Common myeloid progenitor, CD34-positive (primary cell): ENCODE measurements at regions of chr2 and their contacts with region 1.

Region 1: GRCh38 chr2:54704688-54705605 is 18.5 kb upstream of the EML6 start:
- DNase-seq: peak; percentile 69 to 86 (median 83)
- H3K4me3 ChIP-seq: no peak overlapping the region
- H3K27ac ChIP-seq: no peak overlapping the region
- H3K4me1 ChIP-seq: peaks cover 0 to 14% (median 11%) of the 10 kb centered on the region in 4 experiments
- H3K27me3 ChIP-seq: peaks cover 0 to 11% (median 0%) of the 10 kb centered on the region in 5 experiments

Region 2: GRCh38 chr2:54106631-54107454 is 598.1 kb before region 1 on chr2:
- CTCF ChIA-PET with region 1: interaction called, 14 read pairs
- POLR2A ChIA-PET with region 1: no interaction called
- DNase-seq: peak; percentile 69 to 83 (median 78)
- H3K4me3 ChIP-seq: peak overlapping the region in 1 of 7 experiments; percentile 53
- H3K27ac ChIP-seq: no peak overlapping the region
- H3K4me1 ChIP-seq: peaks cover 2 to 9% (median 7%) of the 10 kb centered on the region in 4 experiments
- H3K27me3 ChIP-seq: no peaks in the 10 kb centered on the region

Region 3: DNA sequence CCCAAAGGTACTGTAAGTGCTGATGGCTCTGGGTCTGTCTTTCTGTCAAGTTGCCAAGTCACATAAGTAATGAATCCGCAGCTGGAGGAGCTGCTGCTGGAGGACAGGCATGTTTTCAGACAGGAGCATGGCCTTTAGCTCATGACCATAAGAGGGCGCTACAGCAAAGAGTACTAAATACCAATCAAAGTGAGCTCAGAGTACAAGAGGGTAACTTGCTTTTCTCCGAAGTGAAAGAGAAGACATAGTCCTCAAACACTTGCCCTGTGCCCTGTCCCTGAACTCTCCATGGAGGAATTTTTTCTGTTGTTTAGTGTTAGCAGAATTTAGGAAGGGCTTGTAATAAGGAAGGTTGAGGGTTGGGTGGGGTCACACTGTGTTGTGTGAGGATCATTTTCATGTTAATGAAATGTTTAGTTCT is 39.5 kb before region 1 on chr2:
- CTCF ChIA-PET with region 1: interaction called, 52 read pairs
- POLR2A ChIA-PET with region 1: interaction called, 5 read pairs
- DNase-seq: peak; percentile 71 to 84 (median 73)
- H3K4me3 ChIP-seq: no peak overlapping the region
- H3K27ac ChIP-seq: no peak overlapping the region
- H3K4me1 ChIP-seq: peaks cover 0 to 15% (median 9%) of the 10 kb centered on the region in 4 experiments
- H3K27me3 ChIP-seq: no peaks in the 10 kb centered on the region

Region 4: GRCh38 chr2:54691445-54692135 is 13.4 kb before region 1 on chr2:
- CTCF ChIA-PET with region 1: interaction called, 47 read pairs
- POLR2A ChIA-PET with region 1: no interaction called
- DNase-seq: peak in 2 of 3 donors; percentile 43 to 63
- H3K4me3 ChIP-seq: no peak overlapping the region
- H3K27ac ChIP-seq: no peak overlapping the region
- H3K4me1 ChIP-seq: peaks cover 0 to 14% (median 5%) of the 10 kb centered on the region in 4 experiments
- H3K27me3 ChIP-seq: no peaks in the 10 kb centered on the region

Region 5: DNA sequence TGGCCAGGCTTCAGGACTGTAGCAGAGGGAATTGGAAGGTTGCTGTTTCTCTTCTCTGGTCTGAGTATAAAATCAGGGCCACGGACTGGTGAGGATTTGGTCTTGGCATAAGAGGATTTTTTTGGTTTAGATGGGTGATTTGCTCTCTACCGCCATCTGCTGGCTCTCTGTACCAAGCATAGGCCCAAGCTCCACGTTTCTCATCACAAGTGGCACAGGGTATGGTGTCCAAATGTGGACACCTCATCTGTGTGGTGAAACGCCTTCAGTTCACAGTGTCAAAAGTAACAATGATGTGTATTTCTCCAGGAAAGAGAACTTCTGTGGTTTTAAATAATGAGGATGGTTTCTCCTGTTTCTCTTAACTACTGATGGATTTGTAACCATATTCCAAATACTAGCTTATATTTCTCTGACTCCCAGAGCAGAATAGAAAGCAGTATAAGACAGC is 133.7 kb after region 1 on chr2:
- CTCF ChIA-PET with region 1: interaction called, 13 read pairs
- POLR2A ChIA-PET with region 1: no interaction called
- DNase-seq: peak; percentile 67 to 83 (median 71)
- H3K4me3 ChIP-seq: no peak overlapping the region
- H3K27ac ChIP-seq: no peak overlapping the region
- H3K4me1 ChIP-seq: no peaks in the 10 kb centered on the region
- H3K27me3 ChIP-seq: no peaks in the 10 kb centered on the region